ENCODE measurements at regions of chr9 and their contacts with region 1.

Region 1: DNA sequence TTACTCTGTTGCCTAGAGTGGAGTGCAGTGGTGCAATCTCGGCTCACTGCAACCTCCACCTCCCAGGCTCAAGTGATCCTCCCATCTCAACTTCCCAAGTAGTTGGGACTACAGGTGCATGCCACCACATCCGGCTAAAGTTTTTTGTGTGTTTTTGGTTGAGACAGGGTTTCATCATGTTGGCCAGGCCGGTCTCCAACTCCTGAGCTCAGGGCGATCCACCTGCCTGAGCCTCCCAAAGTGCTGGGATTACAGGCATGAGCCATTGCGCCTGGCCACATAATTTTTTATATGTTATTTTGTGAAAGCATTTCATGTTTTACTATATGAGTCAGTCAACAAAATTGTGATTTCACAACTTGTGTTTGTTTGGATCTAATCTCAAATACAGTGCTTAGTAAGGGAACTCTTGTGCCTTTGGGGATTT is 20.0 kb upstream of the FAM120AOS start:
- DNase-seq: no peak
- ATAC-seq: no peak
- H3K4me3 ChIP-seq: no peak overlapping the region
- H3K4me3 Mint-ChIP-seq: no peak overlapping the region
- H3K27ac ChIP-seq: no peak overlapping the region
- H3K27ac Mint-ChIP-seq: no peak overlapping the region
- H3K4me1 ChIP-seq: peaks cover 9% of the 10 kb centered on the region
- H3K4me1 Mint-ChIP-seq: peaks cover 57% of the 10 kb centered on the region
- H3K27me3 ChIP-seq: no peaks in the 10 kb centered on the region
- H3K27me3 Mint-ChIP-seq: no peaks in the 10 kb centered on the region
- CTCF ChIP-seq: no peak

Region 2: DNA sequence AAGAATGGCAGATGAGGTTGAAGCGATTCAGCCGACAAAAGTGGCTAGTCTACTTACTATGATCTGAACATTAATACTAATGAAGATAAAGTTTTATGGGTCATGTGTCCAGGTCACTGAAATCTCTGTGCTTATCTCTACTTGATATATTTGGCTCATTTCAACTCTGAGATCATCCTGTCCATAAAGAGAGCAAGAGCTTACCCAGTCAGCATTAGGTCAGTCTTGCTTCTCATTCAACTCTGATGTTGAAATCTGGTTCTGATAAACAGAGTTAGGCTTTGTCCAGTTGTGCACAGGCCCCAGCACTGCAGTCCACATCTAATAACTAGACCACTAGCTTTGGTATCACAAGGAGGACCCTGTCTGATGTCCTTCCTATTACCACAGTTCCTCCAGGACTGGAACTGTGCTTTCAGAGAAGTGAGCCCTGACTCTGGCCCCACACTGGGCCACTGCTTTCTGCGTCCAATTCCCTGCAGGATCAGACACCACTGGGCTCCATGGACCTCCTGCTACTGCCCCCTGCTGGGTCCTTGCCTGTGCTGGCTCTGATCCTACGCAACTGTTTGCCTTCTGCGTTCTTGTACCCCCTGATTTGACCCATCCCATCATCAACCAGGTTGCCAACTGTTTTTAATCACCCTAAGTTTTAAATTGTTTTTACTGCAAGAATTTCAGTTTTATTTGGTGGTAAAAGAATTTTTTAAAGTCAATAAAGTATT is 45.5 kb before region 1 on chr9:
- CTCF ChIA-PET with region 1: no interaction called
- POLR2A ChIA-PET with region 1: no interaction called
- intact Hi-C with region 1: loop called in 1 of 2 experiments (anchors 10 kb)
- DNase-seq: no peak
- ATAC-seq: no peak
- H3K4me3 ChIP-seq: no peak overlapping the region
- H3K4me3 Mint-ChIP-seq: no peak overlapping the region
- H3K27ac ChIP-seq: no peak overlapping the region
- H3K27ac Mint-ChIP-seq: no peak overlapping the region
- H3K4me1 ChIP-seq: no peaks in the 10 kb centered on the region
- H3K4me1 Mint-ChIP-seq: no peaks in the 10 kb centered on the region
- H3K27me3 ChIP-seq: peaks cover 0 to 2% of the 10 kb centered on the region in 2 experiments
- H3K27me3 Mint-ChIP-seq: peaks cover 8% of the 10 kb centered on the region
- CTCF ChIP-seq: no peak

Measured in CD8-positive, alpha-beta T cell (primary cell).